ENCODE measurements at regions of chr17 and their contacts with region 1.

Region 1: GRCh38 chr17:44775136-44775837 is 16.5 kb downstream of the ADAM11 start:
- DNase-seq: peak in 8 of 9 donors; percentile 83 to 95 (median 94)
- ATAC-seq: peak; percentile 96
- H3K4me3 ChIP-seq: peak overlapping the region; percentile 87
- H3K4me3 Mint-ChIP-seq: peak overlapping the region; percentile 88 to 93 (median 90)
- H3K27ac ChIP-seq: peak overlapping the region; percentile 76
- H3K27ac Mint-ChIP-seq: peak overlapping the region in 7 of 9 donors; percentile 58 to 80 (median 73)
- H3K4me1 ChIP-seq: peaks cover 0 to 11% of the 10 kb centered on the region in 2 donors
- H3K4me1 Mint-ChIP-seq: peaks cover 0 to 14% (median 9%) of the 10 kb centered on the region in 7 donors
- H3K27me3 ChIP-seq: no peaks in the 10 kb centered on the region
- H3K27me3 Mint-ChIP-seq: peaks cover 0 to 10% (median 5%) of the 10 kb centered on the region in 5 donors

Region 2: DNA sequence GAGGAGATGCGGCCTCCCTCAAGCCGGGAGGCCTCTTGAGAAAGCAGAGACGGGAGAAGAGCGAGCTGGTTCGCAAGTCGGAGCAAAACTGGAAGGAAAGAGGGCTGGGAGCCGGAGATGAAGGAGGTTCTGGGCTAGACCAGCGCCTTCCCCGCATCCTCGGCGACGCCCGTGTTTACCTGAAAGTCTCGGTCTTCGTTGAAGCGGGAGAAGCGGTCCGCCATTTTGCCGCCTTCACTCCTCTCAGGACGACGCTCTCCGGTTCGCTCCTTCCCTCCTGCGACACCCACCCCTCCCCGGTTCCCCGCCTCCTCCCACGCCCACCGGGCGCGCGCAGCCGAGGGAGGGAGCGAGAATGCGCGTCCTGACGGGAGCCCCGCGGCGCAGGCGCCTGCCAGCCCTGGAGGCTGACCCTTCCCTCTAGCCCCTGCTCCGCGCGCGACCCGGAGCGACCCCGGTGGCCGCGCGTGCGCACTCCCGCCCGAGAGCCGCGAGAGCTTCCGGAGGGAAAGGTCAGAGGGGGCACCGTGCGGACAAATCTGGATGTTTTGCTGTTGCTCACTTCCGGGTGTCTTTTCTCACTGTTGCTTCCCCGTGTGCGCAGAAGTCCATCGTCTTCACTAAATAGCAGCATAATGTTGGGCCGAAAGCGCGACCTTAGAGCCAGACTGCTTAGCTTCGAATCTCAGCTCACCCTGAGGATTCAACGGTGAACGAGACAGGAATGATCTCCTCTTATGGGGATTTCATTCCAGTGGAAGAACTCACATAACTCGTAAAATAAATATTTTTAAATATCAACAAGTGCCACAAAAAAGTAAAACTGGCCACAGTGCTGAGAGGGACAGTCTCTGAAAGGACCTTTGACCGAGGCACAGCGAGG is 271.9 kb before region 1 on chr17 and contains the start of gene GPATCH8:
- CTCF ChIA-PET with region 1: no interaction called
- POLR2A ChIA-PET with region 1: no interaction called
- intact Hi-C with region 1: loop called in 1 of 2 experiments (anchors 1 kb)
- DNase-seq: peak; percentile 87 to 97 (median 94)
- ATAC-seq: peak; percentile 94
- H3K4me3 ChIP-seq: peak within 1 kb of the TSS; percentile 84
- H3K4me3 Mint-ChIP-seq: peak within 1 kb of the TSS; percentile 92 to 99 (median 98)
- H3K27ac ChIP-seq: peak within 1 kb of the TSS; percentile 93
- H3K27ac Mint-ChIP-seq: peak within 1 kb of the TSS; percentile 95 to 99 (median 97)
- H3K4me1 ChIP-seq: peaks cover 18 to 25% of the 10 kb centered on the region in 2 donors
- H3K4me1 Mint-ChIP-seq: peaks cover 24 to 50% (median 39%) of the 10 kb centered on the region in 7 donors
- H3K27me3 ChIP-seq: no peaks in the 10 kb centered on the region
- H3K27me3 Mint-ChIP-seq: peaks cover 0 to 5% (median 4%) of the 10 kb centered on the region in 5 donors
- total RNA-seq, gene GPATCH8: 45.0 to 88.5 (median 82.9) TPM

Region 3: GRCh38 chr17:44722254-44722653 is 53.0 kb before region 1 on chr17:
- CTCF ChIA-PET with region 1: no interaction called
- POLR2A ChIA-PET with region 1: no interaction called
- intact Hi-C with region 1: no loop called
- DNase-seq: no peak
- ATAC-seq: no peak
- H3K4me3 ChIP-seq: no peak overlapping the region
- H3K4me3 Mint-ChIP-seq: no peak overlapping the region
- H3K27ac ChIP-seq: no peak overlapping the region
- H3K27ac Mint-ChIP-seq: no peak overlapping the region
- H3K4me1 ChIP-seq: no peaks in the 10 kb centered on the region
- H3K4me1 Mint-ChIP-seq: no peaks in the 10 kb centered on the region
- H3K27me3 ChIP-seq: no peaks in the 10 kb centered on the region
- H3K27me3 Mint-ChIP-seq: no peaks in the 10 kb centered on the region

Region 4: GRCh38 chr17:44829523-44830358 is 54.5 kb after region 1 on chr17 and contains the start of gene GJC1:
- CTCF ChIA-PET with region 1: interaction called, 3 read pairs
- POLR2A ChIA-PET with region 1: no interaction called
- intact Hi-C with region 1: loop called (anchors 2 to 5 kb)
- DNase-seq: peak in 4 of 9 donors; percentile 3 to 62 (median 14)
- ATAC-seq: peak; percentile 27
- H3K4me3 ChIP-seq: peak within 1 kb of the TSS; percentile 12
- H3K4me3 Mint-ChIP-seq: peak within 1 kb of the TSS; percentile 77 to 92 (median 82)
- H3K27ac ChIP-seq: no peak within 1 kb of the TSS
- H3K27ac Mint-ChIP-seq: peak within 1 kb of the TSS in 3 of 9 donors; percentile 33 to 58 (median 52)
- H3K4me1 ChIP-seq: peaks cover 5 to 7% of the 10 kb centered on the region in 2 donors
- H3K4me1 Mint-ChIP-seq: peaks cover 7 to 12% (median 10%) of the 10 kb centered on the region in 7 donors
- H3K27me3 ChIP-seq: peaks cover 11 to 28% of the 10 kb centered on the region in 2 donors
- H3K27me3 Mint-ChIP-seq: peaks cover 40 to 69% (median 56%) of the 10 kb centered on the region in 5 donors
- total RNA-seq, gene GJC1: 0.20 to 1.4 TPM in 2 of 5 experiments, not detected in the others

Region 5: GRCh38 chr17:44899069-44899782 is 123.9 kb after region 1 on chr17 and contains the start of gene EFTUD2:
- CTCF ChIA-PET with region 1: interaction called, 4 read pairs
- POLR2A ChIA-PET with region 1: no interaction called
- intact Hi-C with region 1: loop called (anchors 1 kb)
- DNase-seq: peak; percentile 91 to 99 (median 96)
- ATAC-seq: peak; percentile 94
- H3K4me3 ChIP-seq: peak within 1 kb of the TSS; percentile 89
- H3K4me3 Mint-ChIP-seq: peak within 1 kb of the TSS; percentile 84 to 97 (median 96)
- H3K27ac ChIP-seq: peak within 1 kb of the TSS; percentile 96
- H3K27ac Mint-ChIP-seq: peak within 1 kb of the TSS; percentile 99 to 100 (median 99)
- H3K4me1 ChIP-seq: peaks cover 6 to 10% of the 10 kb centered on the region in 2 donors
- H3K4me1 Mint-ChIP-seq: peaks cover 26 to 41% (median 35%) of the 10 kb centered on the region in 7 donors
- H3K27me3 ChIP-seq: no peaks in the 10 kb centered on the region
- H3K27me3 Mint-ChIP-seq: peaks cover 0 to 23% (median 0%) of the 10 kb centered on the region in 5 donors
- total RNA-seq, gene EFTUD2: 94.3 to 157 (median 120) TPM

Region 6: DNA sequence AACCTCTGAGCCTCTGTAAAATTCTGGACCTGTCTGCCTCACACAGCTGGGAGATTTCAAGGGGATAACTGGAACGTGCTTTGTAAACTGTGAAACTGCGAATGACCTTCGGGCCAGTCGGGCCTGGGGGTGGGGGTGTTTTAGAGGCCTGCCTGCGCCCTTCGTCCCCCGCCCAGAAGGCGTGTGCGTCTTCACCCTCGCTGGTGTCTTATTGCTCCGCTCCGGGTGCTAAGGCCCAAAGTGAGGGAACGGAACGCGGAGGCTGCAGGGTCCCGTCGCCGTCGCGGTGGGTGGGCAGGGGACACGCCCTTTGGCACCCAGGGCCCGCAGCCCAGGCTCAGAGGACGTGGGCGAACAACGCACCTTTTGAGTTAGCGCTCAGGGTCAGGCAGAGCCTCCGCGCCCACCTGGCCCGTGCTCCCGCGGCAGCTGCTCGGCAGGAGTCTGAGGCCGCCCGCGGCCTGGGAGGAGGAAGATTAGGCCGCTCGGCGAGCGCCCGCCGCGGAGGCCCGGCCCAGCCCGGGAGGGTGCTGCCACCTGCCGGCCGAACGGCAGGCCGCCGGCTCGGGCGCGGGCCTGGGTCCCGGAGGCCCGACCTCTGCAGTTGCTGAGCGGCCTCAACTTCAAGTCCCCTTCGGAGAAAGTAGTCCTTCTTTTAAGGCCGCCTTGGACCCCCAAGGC is 246.5 kb after region 1 on chr17:
- CTCF ChIA-PET with region 1: interaction called, 9 read pairs
- POLR2A ChIA-PET with region 1: no interaction called
- intact Hi-C with region 1: loop called (anchors 1 to 5 kb)
- DNase-seq: peak; percentile 34 to 81 (median 60)
- ATAC-seq: peak; percentile 91
- H3K4me3 ChIP-seq: peak overlapping the region; percentile 47
- H3K4me3 Mint-ChIP-seq: peak overlapping the region; percentile 35 to 82 (median 67)
- H3K27ac ChIP-seq: peak overlapping the region; percentile 14
- H3K27ac Mint-ChIP-seq: peak overlapping the region in 2 of 9 donors; percentile 5 to 74
- H3K4me1 ChIP-seq: peaks cover 15 to 17% of the 10 kb centered on the region in 2 donors
- H3K4me1 Mint-ChIP-seq: peaks cover 6 to 26% (median 18%) of the 10 kb centered on the region in 7 donors
- H3K27me3 ChIP-seq: peaks cover 0 to 11% of the 10 kb centered on the region in 2 donors
- H3K27me3 Mint-ChIP-seq: peaks cover 32 to 35% (median 34%) of the 10 kb centered on the region in 5 donors

Region 7: DNA sequence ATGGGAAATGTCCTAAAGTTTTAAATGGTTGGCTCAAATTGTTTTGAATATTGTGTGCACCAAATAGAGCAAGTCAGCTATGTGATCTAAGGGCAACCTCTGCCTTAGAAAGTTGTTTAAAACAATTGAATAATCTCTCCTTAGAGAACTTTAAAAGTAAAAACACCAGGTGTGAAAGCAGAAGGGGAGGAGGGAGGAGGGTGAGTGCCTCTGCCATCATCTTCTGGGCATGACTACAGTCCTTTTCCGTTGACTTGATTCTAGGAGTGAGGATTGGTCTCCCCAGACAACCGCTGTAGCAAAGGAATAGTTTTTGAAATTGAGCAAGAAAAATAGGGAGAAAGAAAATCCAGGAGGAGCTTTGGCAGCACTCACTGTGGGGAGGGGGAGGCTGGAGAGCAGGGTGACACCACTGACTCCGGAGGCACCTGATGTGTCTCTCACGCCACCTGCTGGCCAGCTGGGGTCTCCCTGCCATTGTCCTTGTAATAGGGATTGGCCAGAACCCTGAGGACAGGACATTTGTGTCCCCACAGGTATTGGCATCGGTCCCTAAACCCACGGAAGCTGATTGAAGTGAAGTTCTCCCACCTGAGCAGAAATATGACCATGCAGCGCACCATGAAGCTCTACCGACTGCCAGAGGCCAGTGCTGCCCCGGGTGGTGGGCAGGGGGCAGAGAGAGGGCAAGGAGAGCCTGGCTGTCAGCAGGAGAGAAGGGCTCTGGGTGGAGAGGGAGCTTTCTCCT is 323.8 kb after region 1 on chr17:
- CTCF ChIA-PET with region 1: no interaction called
- POLR2A ChIA-PET with region 1: no interaction called
- intact Hi-C with region 1: loop called in 1 of 2 experiments (anchors 1 kb)
- DNase-seq: peak; percentile 38 to 77 (median 66)
- ATAC-seq: peak; percentile 89
- H3K4me3 ChIP-seq: no peak overlapping the region
- H3K4me3 Mint-ChIP-seq: no peak overlapping the region
- H3K27ac ChIP-seq: no peak overlapping the region
- H3K27ac Mint-ChIP-seq: peak overlapping the region in 6 of 9 donors; percentile 4 to 87 (median 62)
- H3K4me1 ChIP-seq: no peaks in the 10 kb centered on the region
- H3K4me1 Mint-ChIP-seq: peaks cover 0 to 6% (median 0%) of the 10 kb centered on the region in 7 donors
- H3K27me3 ChIP-seq: no peaks in the 10 kb centered on the region
- H3K27me3 Mint-ChIP-seq: no peaks in the 10 kb centered on the region

Region 8: GRCh38 chr17:45317112-45317928 is 542.0 kb after region 1 on chr17:
- CTCF ChIA-PET with region 1: no interaction called
- POLR2A ChIA-PET with region 1: no interaction called
- intact Hi-C with region 1: loop called in 1 of 2 experiments (anchors 10 kb)
- DNase-seq: peak; percentile 97 to 100 (median 100)
- ATAC-seq: peak; percentile 92
- H3K4me3 ChIP-seq: peak overlapping the region; percentile 80
- H3K4me3 Mint-ChIP-seq: peak overlapping the region; percentile 81 to 97 (median 92)
- H3K27ac ChIP-seq: peak overlapping the region; percentile 93
- H3K27ac Mint-ChIP-seq: peak overlapping the region; percentile 90 to 98 (median 95)
- H3K4me1 ChIP-seq: peaks cover 47 to 57% of the 10 kb centered on the region in 2 donors
- H3K4me1 Mint-ChIP-seq: peaks cover 60 to 88% (median 82%) of the 10 kb centered on the region in 7 donors
- H3K27me3 ChIP-seq: no peaks in the 10 kb centered on the region
- H3K27me3 Mint-ChIP-seq: peaks cover 0 to 4% (median 0%) of the 10 kb centered on the region in 5 donors

Region 9: DNA sequence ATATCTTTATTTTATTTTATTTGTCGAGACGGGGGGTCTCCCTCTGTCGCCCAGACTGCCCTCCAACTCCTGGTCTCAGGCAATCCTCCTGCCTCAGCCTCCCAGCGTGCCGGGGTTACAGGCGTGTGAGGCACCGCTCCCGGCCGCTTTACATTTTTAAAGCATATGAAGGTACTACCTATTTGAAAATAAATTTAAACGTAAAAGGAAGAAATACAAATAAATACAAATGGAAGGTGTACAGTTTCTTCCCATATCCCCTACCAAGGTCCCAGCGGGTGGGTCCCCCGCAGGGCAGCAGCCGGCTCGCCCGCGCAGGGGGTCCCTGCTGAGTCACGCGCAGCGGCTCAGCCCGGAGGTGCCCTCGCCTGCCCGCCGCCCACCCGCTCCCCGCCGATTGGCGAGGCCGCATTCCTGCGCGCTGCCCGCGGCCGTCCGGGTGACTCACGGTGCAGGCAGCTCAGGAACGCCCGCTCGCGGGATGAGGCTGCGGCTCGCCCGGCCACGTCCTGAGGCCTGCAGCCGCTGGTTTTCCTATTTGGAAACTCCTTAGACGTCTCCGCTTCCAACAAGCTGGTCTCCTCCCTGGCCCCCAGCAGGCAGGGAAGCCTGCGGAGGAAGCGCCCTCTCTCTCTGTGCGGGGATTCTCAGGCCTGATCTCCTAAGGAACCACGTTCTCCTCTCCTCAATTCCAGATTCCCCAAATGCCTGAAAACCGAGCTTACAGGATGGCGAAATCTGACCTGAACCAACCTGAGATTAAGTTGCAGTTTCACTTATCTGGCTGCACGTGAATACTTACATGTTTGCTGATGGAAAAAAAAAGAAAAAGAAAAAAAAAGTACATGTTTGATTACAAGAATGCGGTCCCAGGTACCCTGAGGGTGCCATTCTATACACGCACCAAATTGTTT is 596.4 kb after region 1 on chr17:
- CTCF ChIA-PET with region 1: no interaction called
- POLR2A ChIA-PET with region 1: no interaction called
- intact Hi-C with region 1: no loop called
- DNase-seq: peak in 1 of 9 donors; percentile 67
- ATAC-seq: peak; percentile 69
- H3K4me3 ChIP-seq: no peak overlapping the region
- H3K4me3 Mint-ChIP-seq: peak overlapping the region; percentile 33 to 88 (median 76)
- H3K27ac ChIP-seq: no peak overlapping the region
- H3K27ac Mint-ChIP-seq: peak overlapping the region in 1 of 9 donors; percentile 2
- H3K4me1 ChIP-seq: no peaks in the 10 kb centered on the region
- H3K4me1 Mint-ChIP-seq: peaks cover 12 to 18% (median 16%) of the 10 kb centered on the region in 7 donors
- H3K27me3 ChIP-seq: no peaks in the 10 kb centered on the region
- H3K27me3 Mint-ChIP-seq: peaks cover 11 to 31% (median 19%) of the 10 kb centered on the region in 5 donors